PC-3 (cell line): ENCODE measurements at regions of chr3 and their contacts with region 1.

Region 1: GRCh38 chr3:141933421-141934300 is 57.2 kb downstream of the ATP1B3 start:
- DNase-seq: no peak
- ATAC-seq: no peak
- H3K4me3 ChIP-seq: no peak overlapping the region
- H3K27ac ChIP-seq: no peak overlapping the region
- H3K4me1 ChIP-seq: peaks cover 4% of the 10 kb centered on the region; the same call in 1 of the 2 replicates
- H3K27me3 ChIP-seq: no peaks in the 10 kb centered on the region
- CTCF ChIP-seq: no peak

Region 2: GRCh38 chr3:141959921-141960554 is 26.4 kb after region 1 on chr3:
- CTCF ChIA-PET with region 1: no interaction called
- POLR2A ChIA-PET with region 1: interaction called, 20 read pairs
- intact Hi-C with region 1: no loop called
- DNase-seq: peak; percentile 68
- ATAC-seq: peak; percentile 79
- H3K4me3 ChIP-seq: no peak overlapping the region
- H3K27ac ChIP-seq: peak overlapping the region; percentile 0; the same call in 1 of the 2 replicates
- H3K4me1 ChIP-seq: peaks cover 18% of the 10 kb centered on the region
- H3K27me3 ChIP-seq: no peaks in the 10 kb centered on the region
- CTCF ChIP-seq: no peak